OCI-LY7 (cell line): ENCODE measurements at regions of chr6 and their contacts with region 1.

Region 1: GRCh38 chr6:52670502-52671409 is at the start of gene TMEM14A:
- DNase-seq: peak; percentile 92
- H3K4me3 ChIP-seq: peak within 1 kb of the TSS; percentile 75
- H3K27ac ChIP-seq: peak within 1 kb of the TSS; percentile 13
- H3K4me1 ChIP-seq: peaks cover 50% of the 10 kb centered on the region
- CTCF ChIP-seq: no peak
- total RNA-seq, gene TMEM14A: 14.6 and 17.8 TPM in 2 replicates

Region 2: DNA sequence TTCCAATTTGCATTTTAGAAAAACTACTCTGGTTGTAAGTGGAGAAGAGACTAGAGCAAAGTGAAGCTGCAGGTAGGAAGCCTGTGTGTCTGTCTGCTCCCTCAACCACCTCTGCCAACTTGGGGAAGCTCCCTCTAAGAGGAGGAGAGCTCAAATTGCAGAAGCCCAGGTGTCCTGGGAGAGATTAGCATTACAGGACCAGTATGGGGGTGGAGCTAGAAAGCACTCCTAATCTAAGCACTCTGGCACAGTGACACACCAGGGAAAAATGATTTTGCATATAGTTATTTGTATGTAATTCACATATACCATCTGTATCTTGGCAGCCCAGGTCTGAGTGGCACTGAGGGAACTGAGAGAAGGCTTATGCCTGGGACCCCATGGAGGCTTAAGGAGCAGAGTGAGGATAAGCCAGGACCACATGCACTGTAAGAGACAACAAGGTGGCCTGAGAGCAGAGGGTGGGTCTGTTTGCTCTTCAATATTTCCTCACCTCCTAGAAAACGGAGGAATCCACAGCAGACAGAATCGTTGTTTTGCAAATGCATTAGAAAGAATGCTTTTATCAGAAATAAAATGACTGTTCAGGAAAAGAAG is 78.9 kb after region 1 on chr6:
- CTCF ChIA-PET with region 1: no interaction called
- POLR2A ChIA-PET with region 1: no interaction called
- intact Hi-C with region 1: no loop called
- DNase-seq: no peak
- H3K4me3 ChIP-seq: no peak overlapping the region
- H3K27ac ChIP-seq: no peak overlapping the region
- H3K4me1 ChIP-seq: no peaks in the 10 kb centered on the region
- CTCF ChIP-seq: no peak

Region 3: GRCh38 chr6:53064726-53065215 is 394.0 kb after region 1 on chr6:
- CTCF ChIA-PET with region 1: no interaction called
- POLR2A ChIA-PET with region 1: no interaction called
- intact Hi-C with region 1: loop called (anchors 2 kb)
- DNase-seq: peak; percentile 98
- H3K4me3 ChIP-seq: peak overlapping the region; percentile 78
- H3K27ac ChIP-seq: peak overlapping the region; percentile 72
- H3K4me1 ChIP-seq: peaks cover 48% of the 10 kb centered on the region
- CTCF ChIP-seq: peak; percentile 6; the same call in 1 of the 2 replicates